ENCODE measurements at regions of chr15 and their contacts with region 1.

Region 1: DNA sequence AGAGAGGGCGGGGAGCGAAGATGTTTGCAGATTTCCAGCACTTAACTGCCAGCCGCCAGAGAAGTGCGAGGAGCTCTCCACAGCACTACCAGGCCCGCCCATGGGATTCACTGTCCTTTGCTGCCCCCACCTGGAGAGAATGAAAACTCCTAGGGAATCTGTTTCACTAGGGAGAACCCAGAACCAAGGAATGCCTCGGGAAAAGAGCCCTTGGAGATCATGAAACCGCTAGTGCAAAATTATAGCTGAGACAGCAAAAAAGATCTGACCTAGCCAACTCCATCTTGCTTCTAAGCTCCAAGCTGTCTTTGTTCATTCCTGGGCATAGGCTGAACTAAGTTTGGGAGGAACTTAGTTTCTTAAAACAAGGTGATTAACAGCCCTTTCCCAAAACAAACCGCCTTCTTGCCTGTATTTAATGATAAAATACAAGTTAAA is 82.6 kb upstream of the GCNT3 start:
- DNase-seq: peak; percentile 74 to 93
- ATAC-seq: peak; percentile 95 to 99
- H3K4me3 ChIP-seq: no peak overlapping the region
- H3K27ac ChIP-seq: no peak overlapping the region
- H3K4me1 ChIP-seq: peaks cover 10% of the 10 kb centered on the region; the same call in 1 of the 3 replicates
- CTCF ChIP-seq: peak; percentile 97
- EP300 ChIP-seq: no peak
- POLR2A ChIP-seq: no peak
- RAD21 ChIP-seq: peak; percentile 99

Region 2: GRCh38 chr15:58221591-58222241 is 1307.3 kb before region 1 on chr15:
- CTCF ChIA-PET with region 1: interaction called, 10 read pairs
- POLR2A ChIA-PET with region 1: no interaction called
- DNase-seq: peak; percentile 53 to 72
- ATAC-seq: peak; percentile 93 to 97
- H3K4me3 ChIP-seq: no peak overlapping the region
- H3K27ac ChIP-seq: no peak overlapping the region
- H3K4me1 ChIP-seq: no peaks in the 10 kb centered on the region
- CTCF ChIP-seq: peak; percentile 55
- EP300 ChIP-seq: no peak
- POLR2A ChIP-seq: no peak
- RAD21 ChIP-seq: peak; percentile 58 to 76; a peak in 4 of 5 replicates

Region 3: DNA sequence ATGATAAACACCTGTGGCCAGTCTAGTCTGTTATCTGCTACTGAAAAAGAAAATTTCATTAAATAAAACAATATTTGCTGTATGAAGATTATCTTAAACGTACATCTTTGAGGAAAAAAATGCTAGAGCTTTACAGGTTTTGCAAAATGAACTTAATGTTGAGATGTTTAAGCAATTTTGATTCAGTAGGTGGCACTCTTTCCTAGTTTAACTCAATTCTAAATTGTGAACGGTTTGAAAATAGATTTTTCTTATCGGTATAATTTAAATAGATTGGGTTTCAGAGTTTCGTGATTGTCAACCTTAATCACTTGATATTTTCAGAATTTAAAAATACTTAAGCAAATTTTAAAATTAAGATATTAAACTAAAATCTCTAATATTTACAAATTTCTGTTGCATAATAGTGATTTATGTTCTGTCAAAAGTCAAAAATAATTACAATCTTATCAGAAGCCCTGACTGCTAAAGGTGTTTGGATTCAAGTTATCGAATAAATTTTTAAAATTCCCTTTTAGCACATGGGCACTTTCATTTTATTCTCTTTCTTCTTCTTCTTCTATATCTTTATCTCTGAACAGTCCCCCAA is 548.5 kb before region 1 on chr15:
- CTCF ChIA-PET with region 1: interaction called, 10 read pairs
- POLR2A ChIA-PET with region 1: no interaction called
- DNase-seq: peak; percentile 43 to 50
- ATAC-seq: peak in 1 of 2 experiments; percentile 55; a peak in 1 of 6 replicates
- H3K4me3 ChIP-seq: no peak overlapping the region
- H3K27ac ChIP-seq: no peak overlapping the region
- H3K4me1 ChIP-seq: no peaks in the 10 kb centered on the region
- CTCF ChIP-seq: peak; percentile 87
- EP300 ChIP-seq: no peak
- POLR2A ChIP-seq: no peak
- RAD21 ChIP-seq: peak; percentile 83 to 91

Region 4: GRCh38 chr15:59424616-59425015 is 104.4 kb before region 1 on chr15:
- CTCF ChIA-PET with region 1: no interaction called
- POLR2A ChIA-PET with region 1: no interaction called
- DNase-seq: no peak
- ATAC-seq: no peak
- H3K4me3 ChIP-seq: no peak overlapping the region
- H3K27ac ChIP-seq: no peak overlapping the region
- H3K4me1 ChIP-seq: no peaks in the 10 kb centered on the region
- CTCF ChIP-seq: no peak
- EP300 ChIP-seq: no peak
- POLR2A ChIP-seq: no peak
- RAD21 ChIP-seq: no peak

Region 5: GRCh38 chr15:59501597-59501996 is 27.4 kb before region 1 on chr15:
- CTCF ChIA-PET with region 1: interaction called, 23 read pairs
- POLR2A ChIA-PET with region 1: no interaction called
- DNase-seq: peak; percentile 80 to 90
- ATAC-seq: peak; percentile 95 to 97
- H3K4me3 ChIP-seq: no peak overlapping the region
- H3K27ac ChIP-seq: no peak overlapping the region
- H3K4me1 ChIP-seq: no peaks in the 10 kb centered on the region
- CTCF ChIP-seq: peak; percentile 98
- EP300 ChIP-seq: no peak
- POLR2A ChIP-seq: no peak
- RAD21 ChIP-seq: peak; percentile 95 to 97

Region 6: GRCh38 chr15:59562448-59563186 is 33.6 kb after region 1 on chr15:
- CTCF ChIA-PET with region 1: interaction called, 312 read pairs
- POLR2A ChIA-PET with region 1: no interaction called
- DNase-seq: no peak
- ATAC-seq: no peak
- H3K4me3 ChIP-seq: no peak overlapping the region
- H3K27ac ChIP-seq: no peak overlapping the region
- H3K4me1 ChIP-seq: peaks cover 11% of the 10 kb centered on the region
- CTCF ChIP-seq: peak; percentile 32; the same call in 2 of the 3 replicates
- EP300 ChIP-seq: no peak
- POLR2A ChIP-seq: no peak
- RAD21 ChIP-seq: peak; percentile 23 to 34; a peak in 2 of 5 replicates

Region 7: GRCh38 chr15:59594493-59594942 is 65.5 kb after region 1 on chr15:
- CTCF ChIA-PET with region 1: interaction called, 60 read pairs
- POLR2A ChIA-PET with region 1: no interaction called
- DNase-seq: peak; percentile 97 to 98
- ATAC-seq: peak; percentile 94 to 95
- H3K4me3 ChIP-seq: no peak overlapping the region
- H3K27ac ChIP-seq: peak overlapping the region; percentile 86 to 92
- H3K4me1 ChIP-seq: peaks cover 40% of the 10 kb centered on the region
- CTCF ChIP-seq: no peak
- EP300 ChIP-seq: peak in 1 of 2 experiments; percentile 47; a peak in 1 of 5 replicates
- POLR2A ChIP-seq: no peak
- RAD21 ChIP-seq: peak; percentile 15 to 42; a peak in 3 of 5 replicates

Region 8: GRCh38 chr15:59622289-59622688 is 93.3 kb after region 1 on chr15:
- CTCF ChIA-PET with region 1: interaction called, 154 read pairs
- POLR2A ChIA-PET with region 1: interaction called, 5 read pairs
- DNase-seq: peak; percentile 86 to 96
- ATAC-seq: peak; percentile 92 to 96
- H3K4me3 ChIP-seq: no peak overlapping the region
- H3K27ac ChIP-seq: no peak overlapping the region; a peak in 2 of 6 replicates
- H3K4me1 ChIP-seq: peaks cover 21% of the 10 kb centered on the region
- CTCF ChIP-seq: peak; percentile 74
- EP300 ChIP-seq: no peak
- POLR2A ChIP-seq: no peak
- RAD21 ChIP-seq: peak; percentile 85 to 91